Prostate gland (tissue), 2 donors: ENCODE measurements at regions of chr17 and their contacts with region 1.

Region 1: DNA sequence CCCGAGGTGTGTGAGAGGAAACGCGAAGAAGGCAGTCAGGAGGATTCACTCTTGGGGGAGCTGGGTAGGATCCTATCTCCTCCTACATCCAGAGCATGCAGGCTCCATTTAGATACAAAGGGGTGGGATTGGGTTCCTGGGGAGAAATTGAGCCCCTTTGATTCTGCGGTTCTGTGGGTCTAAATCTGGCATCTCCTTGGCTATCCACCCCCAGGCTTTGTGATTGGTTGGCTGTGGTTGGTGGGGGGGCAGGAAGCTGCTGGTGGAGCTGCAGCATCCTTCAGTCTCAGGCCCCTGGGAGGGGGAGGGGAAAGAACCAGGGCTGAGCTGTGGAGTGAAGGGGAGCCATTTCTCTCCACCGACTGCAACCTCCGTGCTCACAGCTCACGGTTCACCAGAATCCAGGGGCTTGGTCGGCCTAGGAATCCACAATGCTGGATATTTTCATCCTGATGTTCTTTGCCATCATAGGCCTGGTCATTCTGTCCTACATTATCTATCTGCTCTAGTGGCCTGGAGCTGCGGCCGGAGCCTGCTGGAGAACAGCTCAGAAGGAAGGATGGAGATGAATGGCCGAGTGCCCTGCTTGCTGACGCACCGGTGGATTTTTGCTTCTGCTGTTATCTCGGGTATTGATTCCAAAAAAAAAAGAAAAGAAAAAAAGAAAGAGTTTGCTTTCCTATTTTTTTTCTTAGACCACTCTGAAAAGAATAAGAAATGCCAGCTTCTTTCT is at the start of gene LASP1NB:
- DNase-seq: no peak
- H3K4me3 ChIP-seq: no peak within 1 kb of the TSS
- H3K27ac ChIP-seq: no peak within 1 kb of the TSS
- H3K4me1 ChIP-seq: no peaks in the 10 kb centered on the region
- H3K27me3 ChIP-seq: no peaks in the 10 kb centered on the region
- CTCF ChIP-seq: no peak
- POLR2A ChIP-seq: no peak

Region 2: GRCh38 chr17:38879878-38880682 is 45.3 kb before region 1 on chr17:
- intact Hi-C with region 1: loop called (anchors 2 kb)
- DNase-seq: no peak
- H3K4me3 ChIP-seq: no peak overlapping the region
- H3K27ac ChIP-seq: peak overlapping the region in 1 of 2 donors; percentile 17
- H3K4me1 ChIP-seq: peaks cover 10% of the 10 kb centered on the region
- H3K27me3 ChIP-seq: no peaks in the 10 kb centered on the region
- CTCF ChIP-seq: no peak
- POLR2A ChIP-seq: no peak